Breast epithelium (tissue), 4 donors: ENCODE measurements at regions of chr3 and their contacts with region 1.

Region 1: DNA sequence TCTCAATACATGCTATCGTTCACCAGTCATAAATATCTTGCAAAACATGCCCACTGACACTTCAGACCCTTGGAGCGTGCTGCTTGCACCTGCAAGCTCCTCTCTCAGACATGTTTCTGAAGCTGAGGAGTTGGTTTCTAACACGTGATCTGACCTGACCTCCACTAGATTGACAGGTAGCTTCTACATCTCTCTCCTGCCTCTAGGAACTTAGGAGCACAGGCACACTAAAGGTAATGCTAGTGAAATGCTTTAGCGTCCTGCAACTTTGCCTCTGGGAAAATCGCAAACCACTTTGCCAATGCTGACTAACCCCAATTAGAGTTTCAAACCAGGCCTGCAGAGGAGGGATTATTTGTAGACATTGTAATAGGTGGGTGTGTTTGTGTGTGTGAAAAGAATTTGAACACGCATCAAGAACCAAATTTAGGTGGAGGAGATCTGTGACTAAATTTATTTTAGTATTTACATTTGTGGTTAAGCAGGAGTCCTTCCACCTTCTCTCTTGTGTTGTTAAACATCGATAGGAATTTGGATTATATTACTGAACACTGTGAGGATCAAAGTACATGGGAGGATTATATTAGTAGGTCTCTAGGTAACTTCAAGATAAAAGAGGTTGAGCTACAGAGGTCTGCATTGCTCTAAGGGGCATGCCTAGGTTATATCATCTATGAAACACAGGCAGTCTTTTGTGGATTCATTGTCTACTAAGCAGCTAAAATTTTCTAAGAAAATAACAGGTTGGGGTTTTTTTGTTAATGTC is 86.7 kb upstream of the ZBED2 start:
- DNase-seq: no peak
- H3K4me3 ChIP-seq: no peak overlapping the region
- H3K27ac ChIP-seq: no peak overlapping the region
- H3K4me1 ChIP-seq: no peaks in the 10 kb centered on the region
- H3K27me3 ChIP-seq: no peaks in the 10 kb centered on the region
- CTCF ChIP-seq: no peak
- POLR2A ChIP-seq: no peak

Region 2: DNA sequence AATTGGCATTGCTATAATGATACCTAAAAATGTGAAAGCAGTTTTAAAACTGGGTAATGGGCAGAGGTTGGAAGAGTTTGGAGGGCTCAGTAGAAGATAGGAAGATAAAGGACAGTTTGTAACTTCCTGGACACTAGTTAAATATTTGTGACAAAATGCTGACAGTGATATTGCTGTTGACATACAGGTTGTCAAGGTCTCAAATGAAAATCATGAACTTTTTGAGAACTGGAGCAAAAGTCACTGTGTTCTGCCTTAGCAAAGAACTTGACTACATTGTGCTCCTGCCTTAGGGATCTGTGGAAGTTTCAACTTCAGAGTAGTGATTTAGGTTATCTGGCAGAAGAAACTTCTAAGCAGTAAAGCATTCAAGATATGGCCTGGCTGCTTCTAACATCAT is 253.5 kb before region 1 on chr3:
- intact Hi-C with region 1: no loop called
- DNase-seq: no peak
- H3K4me3 ChIP-seq: no peak overlapping the region
- H3K27ac ChIP-seq: no peak overlapping the region
- H3K4me1 ChIP-seq: no peaks in the 10 kb centered on the region
- H3K27me3 ChIP-seq: no peaks in the 10 kb centered on the region
- CTCF ChIP-seq: no peak
- POLR2A ChIP-seq: no peak

Region 3: DNA sequence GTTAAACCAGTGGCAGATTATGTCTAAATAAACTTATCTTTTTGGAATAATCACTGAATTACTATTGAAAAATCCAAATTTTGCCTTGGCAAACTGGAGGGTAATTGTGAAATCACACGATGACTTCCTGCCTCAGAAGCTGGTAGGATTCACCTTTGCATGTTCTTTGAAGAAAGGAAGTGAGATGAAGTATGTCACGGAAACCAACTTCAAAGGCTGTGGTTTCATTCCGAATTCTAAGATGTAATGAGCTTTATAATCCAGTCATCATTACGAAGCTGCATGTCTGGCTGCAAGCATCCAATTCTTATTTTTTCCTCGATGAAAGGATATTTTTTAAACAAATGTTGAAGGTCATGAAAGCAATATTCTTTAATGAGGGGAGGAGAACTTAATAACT is 71.7 kb before region 1 on chr3:
- intact Hi-C with region 1: no loop called
- DNase-seq: no peak
- H3K4me3 ChIP-seq: no peak overlapping the region
- H3K27ac ChIP-seq: no peak overlapping the region
- H3K4me1 ChIP-seq: no peaks in the 10 kb centered on the region
- H3K27me3 ChIP-seq: no peaks in the 10 kb centered on the region
- CTCF ChIP-seq: no peak
- POLR2A ChIP-seq: no peak

Region 4: DNA sequence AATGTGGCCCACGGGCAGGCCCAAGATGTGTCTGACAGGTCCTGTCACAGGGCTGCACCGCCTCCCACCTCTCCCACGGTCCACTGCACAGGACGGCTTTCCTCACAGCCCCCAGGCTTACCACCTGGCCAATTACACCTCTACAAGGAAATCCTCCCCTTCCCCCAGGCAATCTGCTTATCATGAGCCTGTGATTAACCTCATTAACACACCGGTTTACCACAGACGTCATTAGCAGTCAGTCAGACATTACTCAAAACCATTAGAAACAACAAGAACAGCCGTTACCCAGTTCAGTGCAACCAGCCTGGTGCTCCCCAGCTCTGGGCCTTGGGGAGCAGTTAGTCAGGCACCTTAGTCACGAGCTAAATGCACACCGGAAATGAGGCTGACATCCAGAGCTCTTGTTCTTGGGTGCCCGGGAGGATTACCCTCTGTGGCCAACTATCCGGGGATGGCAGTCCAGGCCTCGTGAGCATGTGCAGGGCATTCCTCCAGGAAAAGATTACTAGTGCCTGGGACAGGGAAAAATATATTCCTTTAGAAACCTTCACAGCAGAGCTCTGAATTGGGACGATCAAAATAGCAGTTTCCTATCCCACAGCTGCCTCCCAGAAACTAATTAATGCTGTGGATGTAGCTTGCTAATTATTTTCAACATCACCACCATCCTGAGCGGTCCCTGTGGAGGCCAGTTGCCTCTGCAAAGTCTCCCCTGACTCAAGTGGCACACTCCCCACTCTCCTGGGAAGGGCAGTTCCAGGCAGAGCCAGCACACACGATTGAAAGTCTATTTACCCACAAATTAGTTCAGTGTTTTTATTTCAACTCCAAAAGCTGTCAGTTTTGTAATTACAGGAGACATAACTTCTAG is 30.7 kb after region 1 on chr3:
- intact Hi-C with region 1: loop called (anchors 2 kb)
- DNase-seq: no peak
- H3K4me3 ChIP-seq: no peak overlapping the region
- H3K27ac ChIP-seq: no peak overlapping the region
- H3K4me1 ChIP-seq: no peaks in the 10 kb centered on the region
- H3K27me3 ChIP-seq: no peaks in the 10 kb centered on the region
- CTCF ChIP-seq: no peak
- POLR2A ChIP-seq: no peak

Region 5: GRCh38 chr3:112303764-112304325 is 622.0 kb after region 1 on chr3:
- intact Hi-C with region 1: loop called (anchors 5 kb)
- DNase-seq: no peak
- H3K4me3 ChIP-seq: peak overlapping the region; percentile 47 to 64 (median 51)
- H3K27ac ChIP-seq: no peak overlapping the region
- H3K4me1 ChIP-seq: no peaks in the 10 kb centered on the region
- H3K27me3 ChIP-seq: no peaks in the 10 kb centered on the region
- CTCF ChIP-seq: no peak
- POLR2A ChIP-seq: no peak